Colonic mucosa (tissue), 4 donors: ENCODE measurements at regions of chr7 and their contacts with region 1.

Region 1: GRCh38 chr7:16695621-16696237 is 49.7 kb downstream of the BZW2 start:
- DNase-seq: peak; percentile 55
- H3K4me3 ChIP-seq: no peak overlapping the region
- H3K27ac ChIP-seq: no peak overlapping the region
- H3K4me1 ChIP-seq: no peaks in the 10 kb centered on the region
- H3K27me3 ChIP-seq: no peaks in the 10 kb centered on the region
- CTCF ChIP-seq: peak; percentile 70

Region 2: DNA sequence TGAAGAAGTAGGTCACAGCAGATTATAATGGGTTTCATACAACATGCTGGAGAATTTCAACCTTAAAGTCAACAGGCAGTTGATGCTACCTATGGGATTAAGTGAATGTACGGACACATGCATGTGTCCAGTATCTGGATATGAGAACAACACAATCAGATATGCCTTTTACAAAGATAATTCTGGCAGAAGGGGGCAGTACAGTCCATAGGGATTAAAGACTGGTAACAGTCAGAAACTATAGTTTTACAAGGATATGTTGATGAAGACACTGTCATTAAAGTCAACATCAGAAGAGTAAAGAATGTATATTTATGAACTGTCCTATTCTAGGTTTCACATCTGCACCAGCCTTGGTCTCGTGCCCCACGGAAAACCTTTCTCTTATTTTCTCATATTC is 91.7 kb before region 1 on chr7:
- intact Hi-C with region 1: loop called (anchors 10 kb)
- DNase-seq: no peak
- H3K4me3 ChIP-seq: no peak overlapping the region
- H3K27ac ChIP-seq: no peak overlapping the region
- H3K4me1 ChIP-seq: no peaks in the 10 kb centered on the region
- H3K27me3 ChIP-seq: no peaks in the 10 kb centered on the region
- CTCF ChIP-seq: no peak

Region 3: GRCh38 chr7:16795624-16796023 is 99.9 kb after region 1 on chr7:
- intact Hi-C with region 1: loop called (anchors 10 kb)
- DNase-seq: no peak
- H3K4me3 ChIP-seq: no peak overlapping the region
- H3K27ac ChIP-seq: no peak overlapping the region
- H3K4me1 ChIP-seq: no peaks in the 10 kb centered on the region
- H3K27me3 ChIP-seq: no peaks in the 10 kb centered on the region
- CTCF ChIP-seq: no peak

Region 4: GRCh38 chr7:16838386-16838785 is 142.7 kb after region 1 on chr7:
- intact Hi-C with region 1: no loop called
- DNase-seq: no peak
- H3K4me3 ChIP-seq: no peak overlapping the region
- H3K27ac ChIP-seq: no peak overlapping the region
- H3K4me1 ChIP-seq: no peaks in the 10 kb centered on the region
- H3K27me3 ChIP-seq: no peaks in the 10 kb centered on the region
- CTCF ChIP-seq: no peak